ENCODE measurements at regions of chr7 and their contacts with region 1.

Region 1: GRCh38 chr7:81499262-81500116 is 270.4 kb downstream of the HGF start:
- DNase-seq: peak; percentile 21
- CTCF ChIP-seq: peak; percentile 54

Region 2: GRCh38 chr7:81349044-81349443 is 150.4 kb before region 1 on chr7:
- CTCF ChIA-PET with region 1: no interaction called
- POLR2A ChIA-PET with region 1: no interaction called
- DNase-seq: no peak
- CTCF ChIP-seq: no peak

Region 3: DNA sequence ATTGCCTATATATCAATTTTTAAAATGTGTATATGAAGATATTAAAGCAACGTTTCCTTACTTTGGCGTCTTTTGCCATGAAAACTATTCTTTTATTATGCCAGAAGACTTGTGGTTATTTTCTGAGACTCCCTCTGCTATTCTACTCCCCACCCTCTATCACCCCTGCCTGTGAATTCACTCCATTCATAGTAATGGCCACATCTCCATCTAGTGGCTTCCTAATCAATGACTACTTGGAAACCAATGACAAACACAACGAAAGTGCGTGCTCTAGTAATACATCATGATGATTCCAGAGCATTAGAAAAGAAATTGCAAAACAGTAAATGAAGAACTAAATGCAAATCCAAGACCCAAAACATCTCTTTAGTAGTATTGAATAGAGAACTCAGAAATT is 457.0 kb after region 1 on chr7:
- CTCF ChIA-PET with region 1: interaction called, 24 read pairs
- POLR2A ChIA-PET with region 1: no interaction called
- DNase-seq: peak; percentile 7
- CTCF ChIP-seq: peak; percentile 43

Region 4: DNA sequence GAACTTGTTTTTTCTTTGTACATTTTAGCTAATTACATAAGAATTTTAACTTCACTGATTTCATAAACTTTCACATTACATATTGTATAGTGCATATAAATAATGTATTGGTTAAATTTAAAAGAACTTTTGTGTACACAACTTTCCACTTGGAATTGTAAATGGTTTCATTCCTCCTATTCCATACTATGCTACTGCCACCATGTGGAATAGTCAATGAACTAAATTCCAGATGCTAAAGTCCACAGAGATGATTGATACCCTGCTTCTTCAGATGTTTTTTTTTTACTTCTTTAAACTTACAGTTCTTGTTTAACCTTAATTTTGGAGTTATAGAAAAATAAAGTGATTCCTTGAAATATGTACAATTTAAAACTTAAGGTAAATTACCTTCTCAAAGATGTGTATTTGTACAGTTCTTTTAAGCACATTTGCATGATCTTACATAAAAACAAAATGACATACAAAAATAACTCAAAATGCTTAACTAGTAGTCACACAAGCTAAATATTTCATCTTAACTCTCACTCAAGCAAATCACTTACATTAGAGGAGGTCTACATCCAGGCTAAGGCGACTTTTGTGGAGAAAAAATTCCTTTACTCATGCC is 518.0 kb after region 1 on chr7:
- CTCF ChIA-PET with region 1: interaction called, 12 read pairs
- POLR2A ChIA-PET with region 1: no interaction called
- DNase-seq: no peak
- CTCF ChIP-seq: peak; percentile 37

Region 5: GRCh38 chr7:82572195-82572880 is 1072.8 kb after region 1 on chr7:
- CTCF ChIA-PET with region 1: interaction called, 13 read pairs
- POLR2A ChIA-PET with region 1: no interaction called
- DNase-seq: peak; percentile 69
- CTCF ChIP-seq: peak; percentile 87